CD8-positive, alpha-beta T cell (primary cell): ENCODE measurements at regions of chr1 and their contacts with region 1.

Region 1: DNA sequence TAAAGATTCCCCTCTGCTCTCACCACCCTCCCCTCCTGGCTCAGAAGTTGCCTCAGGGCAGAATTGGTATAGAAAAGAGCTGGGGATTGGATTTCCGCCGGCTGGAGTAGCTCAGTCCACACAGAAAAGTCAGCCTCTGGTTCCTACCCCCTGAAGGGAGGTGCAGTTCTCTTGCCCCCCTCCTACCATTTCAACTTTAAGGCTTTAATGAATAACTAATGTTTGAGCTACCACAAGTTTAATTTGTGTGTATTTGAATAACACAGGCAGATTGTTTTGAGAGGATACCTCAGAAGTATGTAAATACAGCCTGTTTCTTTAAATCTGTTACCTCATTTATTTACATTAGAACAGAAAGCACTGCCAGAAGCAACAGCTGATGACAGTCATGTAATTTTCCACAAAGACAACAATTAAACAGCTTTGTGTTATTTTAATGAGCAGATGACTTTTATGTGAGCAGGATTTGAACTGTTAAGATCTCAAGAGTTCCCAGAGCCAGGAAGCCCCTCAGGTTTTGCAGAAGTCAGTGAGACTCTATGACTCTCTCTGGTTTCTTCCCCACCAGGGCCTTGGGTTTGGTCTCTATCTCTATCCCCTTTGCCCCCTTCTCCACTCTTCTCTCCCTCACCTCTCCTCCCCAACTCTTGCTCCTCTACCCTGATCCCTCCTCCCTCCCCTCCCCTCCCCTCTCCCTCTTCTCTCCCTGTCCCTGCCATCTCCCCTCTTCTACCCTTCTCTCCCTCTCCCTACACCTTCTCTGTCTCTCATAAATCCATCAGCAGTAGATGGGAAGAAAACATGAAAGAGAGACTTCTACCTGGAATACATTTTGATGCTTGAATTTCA is 26.3 kb downstream of the DUSP10 start:
- DNase-seq: no peak
- ATAC-seq: no peak
- H3K4me3 ChIP-seq: no peak overlapping the region
- H3K4me3 Mint-ChIP-seq: no peak overlapping the region
- H3K27ac ChIP-seq: no peak overlapping the region
- H3K27ac Mint-ChIP-seq: no peak overlapping the region
- H3K4me1 ChIP-seq: peaks cover 37% of the 10 kb centered on the region
- H3K4me1 Mint-ChIP-seq: peaks cover 64% of the 10 kb centered on the region
- H3K27me3 ChIP-seq: peaks cover 0 to 3% of the 10 kb centered on the region in 2 experiments
- H3K27me3 Mint-ChIP-seq: no peaks in the 10 kb centered on the region
- CTCF ChIP-seq: no peak

Region 2: DNA sequence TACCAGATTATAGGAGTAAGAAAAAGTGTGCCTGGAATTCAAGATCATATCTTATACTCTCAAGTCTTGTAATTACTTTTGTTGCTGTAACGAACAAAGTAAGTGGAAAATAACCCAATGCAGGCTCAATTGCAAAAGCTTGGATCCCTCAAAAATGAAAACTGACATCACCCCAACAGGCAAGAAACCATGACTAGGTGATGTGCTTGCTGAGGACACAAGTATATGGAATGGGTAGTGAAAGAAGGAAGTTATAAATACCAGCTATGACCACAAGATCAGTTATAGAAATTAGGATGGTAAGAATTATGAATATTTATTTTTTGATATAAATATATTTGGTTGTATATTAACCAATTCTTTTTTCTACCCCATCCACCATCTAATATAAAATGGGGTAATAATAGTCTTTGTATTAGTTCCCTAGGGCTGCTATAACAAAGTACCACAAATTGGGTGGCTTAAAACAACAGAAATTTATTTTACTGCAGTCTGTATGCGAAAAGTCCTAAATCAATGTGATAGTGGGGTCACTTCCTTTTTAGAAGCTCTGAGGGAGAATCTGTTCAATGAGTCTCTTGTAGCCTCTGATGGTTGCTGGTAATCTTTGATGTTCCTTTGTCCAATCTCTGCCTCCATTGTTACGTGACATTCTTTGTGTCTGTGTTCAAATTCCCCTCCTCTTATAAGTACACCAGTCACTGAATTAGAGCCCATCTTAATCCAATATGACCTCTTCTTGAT is 18.7 kb before region 1 on chr1:
- CTCF ChIA-PET with region 1: no interaction called
- POLR2A ChIA-PET with region 1: no interaction called
- intact Hi-C with region 1: no loop called
- DNase-seq: no peak
- ATAC-seq: no peak
- H3K4me3 ChIP-seq: no peak overlapping the region
- H3K4me3 Mint-ChIP-seq: no peak overlapping the region
- H3K27ac ChIP-seq: no peak overlapping the region
- H3K27ac Mint-ChIP-seq: no peak overlapping the region
- H3K4me1 ChIP-seq: no peaks in the 10 kb centered on the region
- H3K4me1 Mint-ChIP-seq: peaks cover 11% of the 10 kb centered on the region
- H3K27me3 ChIP-seq: no peaks in the 10 kb centered on the region
- H3K27me3 Mint-ChIP-seq: no peaks in the 10 kb centered on the region
- CTCF ChIP-seq: no peak

Region 3: GRCh38 chr1:221725735-221726672 is 10.5 kb after region 1 on chr1:
- CTCF ChIA-PET with region 1: interaction called, 4 read pairs
- POLR2A ChIA-PET with region 1: interaction called, 7 read pairs
- intact Hi-C with region 1: loop called (anchors 2 kb)
- DNase-seq: peak in 1 of 9 experiments; percentile 50
- ATAC-seq: peak; percentile 75
- H3K4me3 ChIP-seq: no peak overlapping the region
- H3K4me3 Mint-ChIP-seq: peak overlapping the region; percentile 20
- H3K27ac ChIP-seq: peak overlapping the region in 1 of 2 experiments; percentile 53
- H3K27ac Mint-ChIP-seq: peak overlapping the region; percentile 68
- H3K4me1 ChIP-seq: peaks cover 33% of the 10 kb centered on the region
- H3K4me1 Mint-ChIP-seq: peaks cover 48% of the 10 kb centered on the region
- H3K27me3 ChIP-seq: no peaks in the 10 kb centered on the region
- H3K27me3 Mint-ChIP-seq: no peaks in the 10 kb centered on the region
- CTCF ChIP-seq: no peak

Region 4: DNA sequence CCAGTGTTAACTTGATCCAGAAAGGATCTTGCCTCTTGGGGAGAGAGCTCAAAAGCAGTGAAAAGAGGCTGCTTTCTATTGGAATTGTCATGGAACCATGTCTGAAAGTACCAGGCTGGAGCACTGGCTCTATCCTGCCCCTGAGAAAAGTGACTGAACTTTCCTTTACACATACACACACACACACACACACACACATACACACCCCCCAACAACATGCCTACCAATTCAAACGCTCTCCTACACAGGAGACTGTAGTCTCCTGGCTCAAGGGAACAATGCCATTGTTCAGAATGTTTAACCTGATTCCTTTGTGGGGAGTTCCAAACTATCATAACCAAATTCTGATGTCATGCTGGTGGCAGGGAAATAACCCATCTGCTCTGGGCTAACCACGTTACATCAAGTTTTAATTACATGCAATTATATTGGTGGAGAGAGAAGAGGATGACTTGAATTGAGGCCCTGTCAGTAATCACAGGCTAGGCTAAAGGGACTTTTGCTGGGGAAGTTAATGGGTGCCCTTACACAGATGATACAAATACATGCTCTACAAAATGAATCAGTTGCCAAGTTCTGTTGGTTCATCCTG is 78.6 kb after region 1 on chr1:
- CTCF ChIA-PET with region 1: no interaction called
- POLR2A ChIA-PET with region 1: no interaction called
- intact Hi-C with region 1: no loop called
- DNase-seq: peak in 2 of 9 experiments; percentile 80 to 87
- ATAC-seq: peak; percentile 76
- H3K4me3 ChIP-seq: no peak overlapping the region
- H3K4me3 Mint-ChIP-seq: no peak overlapping the region
- H3K27ac ChIP-seq: no peak overlapping the region
- H3K27ac Mint-ChIP-seq: peak overlapping the region; percentile 90
- H3K4me1 ChIP-seq: no peaks in the 10 kb centered on the region
- H3K4me1 Mint-ChIP-seq: peaks cover 18% of the 10 kb centered on the region
- H3K27me3 ChIP-seq: no peaks in the 10 kb centered on the region
- H3K27me3 Mint-ChIP-seq: no peaks in the 10 kb centered on the region
- CTCF ChIP-seq: no peak